ENCODE measurements at regions of chr2 and their contacts with region 1.

Region 1: DNA sequence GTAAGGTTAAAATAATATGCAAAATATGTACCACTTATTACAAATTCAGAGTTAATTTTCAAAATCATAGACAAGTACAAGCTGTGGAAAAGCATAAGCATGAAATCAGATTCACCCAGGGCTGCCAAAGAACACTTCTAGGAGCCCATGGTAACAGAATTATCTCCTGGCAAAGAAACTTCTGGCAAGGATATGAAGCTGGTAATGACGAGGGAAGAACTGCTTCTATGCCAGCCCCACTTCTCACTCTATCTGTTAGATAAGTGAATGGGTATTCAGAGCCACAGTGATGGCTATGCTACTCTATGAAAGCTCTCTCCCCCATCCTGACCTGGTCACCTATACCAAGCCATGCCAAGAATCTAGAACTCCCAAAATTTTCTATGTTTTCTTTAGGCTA is 36.9 kb upstream of the PDE1A start:
- DNase-seq: no peak
- H3K4me3 ChIP-seq: no peak overlapping the region
- H3K27ac ChIP-seq: no peak overlapping the region
- H3K4me1 ChIP-seq: no peaks in the 10 kb centered on the region
- H3K27me3 ChIP-seq: no peaks in the 10 kb centered on the region
- CTCF ChIP-seq: no peak
- EP300 ChIP-seq: no peak
- POLR2A ChIP-seq: no peak

Region 2: DNA sequence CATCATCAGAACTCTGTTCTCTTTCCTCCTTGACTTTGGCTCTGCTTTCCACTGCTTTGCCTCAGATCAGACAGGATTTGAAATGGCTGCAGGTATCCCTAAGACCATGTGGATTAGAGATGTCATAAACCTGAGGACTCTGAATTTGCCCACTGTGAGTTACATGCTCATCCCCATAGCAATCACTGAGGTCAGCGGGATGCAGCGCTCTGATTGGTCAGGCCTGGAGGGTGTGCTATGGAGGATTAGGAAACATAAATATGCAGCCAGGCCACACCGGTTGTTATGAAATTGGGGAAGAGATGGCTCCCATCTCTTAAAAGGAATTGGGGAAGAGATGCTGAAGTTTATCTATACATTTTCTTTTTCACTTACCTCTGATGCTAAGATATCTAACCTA is 178.6 kb after region 1 on chr2:
- in situ Hi-C with region 1: no loop called
- intact Hi-C with region 1: no loop called
- DNase-seq: peak; percentile 41
- H3K4me3 ChIP-seq: no peak overlapping the region
- H3K27ac ChIP-seq: no peak overlapping the region
- H3K4me1 ChIP-seq: no peaks in the 10 kb centered on the region
- H3K27me3 ChIP-seq: no peaks in the 10 kb centered on the region
- CTCF ChIP-seq: no peak
- EP300 ChIP-seq: no peak
- POLR2A ChIP-seq: no peak

Region 3: DNA sequence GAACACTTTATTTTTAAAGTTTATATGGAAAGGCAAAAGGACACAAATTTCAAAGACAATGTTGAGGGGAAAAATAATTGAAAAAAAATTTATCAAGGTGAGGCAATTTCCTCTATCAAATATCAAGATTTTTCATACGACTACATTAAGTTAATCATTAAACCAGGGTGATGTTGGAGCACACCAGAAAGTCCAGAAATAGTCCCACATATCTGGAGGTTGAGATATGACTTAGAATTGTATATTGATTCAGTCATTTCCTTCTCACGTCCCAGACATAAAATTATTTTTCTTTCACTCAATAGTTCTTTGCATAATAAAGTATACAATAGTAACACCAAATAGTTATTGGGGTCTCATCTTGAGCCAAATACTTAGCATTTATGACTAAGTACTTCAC is 1265.6 kb after region 1 on chr2:
- in situ Hi-C with region 1: no loop called
- intact Hi-C with region 1: loop called (anchors 5 kb)
- DNase-seq: no peak
- H3K4me3 ChIP-seq: no peak overlapping the region
- H3K27ac ChIP-seq: no peak overlapping the region
- H3K4me1 ChIP-seq: no peaks in the 10 kb centered on the region
- H3K27me3 ChIP-seq: no peaks in the 10 kb centered on the region
- CTCF ChIP-seq: no peak
- EP300 ChIP-seq: no peak
- POLR2A ChIP-seq: no peak